Transverse colon (tissue), 4 donors: ENCODE measurements at regions of chr16 and their contacts with region 1.

Region 1: GRCh38 chr16:30445408-30446202 is at the start of gene SEPHS2:
- DNase-seq: peak; percentile 99
- H3K4me3 ChIP-seq: peak within 1 kb of the TSS; percentile 70 to 99 (median 76)
- H3K27ac ChIP-seq: peak within 1 kb of the TSS; percentile 93 to 99 (median 96)
- H3K4me1 ChIP-seq: peaks cover 11 to 49% (median 32%) of the 10 kb centered on the region in 4 donors
- H3K27me3 ChIP-seq: no peaks in the 10 kb centered on the region
- CTCF ChIP-seq: peak; percentile 21 to 53 (median 42)
- EP300 ChIP-seq: no peak
- POLR2A ChIP-seq: peak; percentile 94
- total RNA-seq, gene SEPHS2: 86.7 to 218 (median 151) TPM

Region 2: DNA sequence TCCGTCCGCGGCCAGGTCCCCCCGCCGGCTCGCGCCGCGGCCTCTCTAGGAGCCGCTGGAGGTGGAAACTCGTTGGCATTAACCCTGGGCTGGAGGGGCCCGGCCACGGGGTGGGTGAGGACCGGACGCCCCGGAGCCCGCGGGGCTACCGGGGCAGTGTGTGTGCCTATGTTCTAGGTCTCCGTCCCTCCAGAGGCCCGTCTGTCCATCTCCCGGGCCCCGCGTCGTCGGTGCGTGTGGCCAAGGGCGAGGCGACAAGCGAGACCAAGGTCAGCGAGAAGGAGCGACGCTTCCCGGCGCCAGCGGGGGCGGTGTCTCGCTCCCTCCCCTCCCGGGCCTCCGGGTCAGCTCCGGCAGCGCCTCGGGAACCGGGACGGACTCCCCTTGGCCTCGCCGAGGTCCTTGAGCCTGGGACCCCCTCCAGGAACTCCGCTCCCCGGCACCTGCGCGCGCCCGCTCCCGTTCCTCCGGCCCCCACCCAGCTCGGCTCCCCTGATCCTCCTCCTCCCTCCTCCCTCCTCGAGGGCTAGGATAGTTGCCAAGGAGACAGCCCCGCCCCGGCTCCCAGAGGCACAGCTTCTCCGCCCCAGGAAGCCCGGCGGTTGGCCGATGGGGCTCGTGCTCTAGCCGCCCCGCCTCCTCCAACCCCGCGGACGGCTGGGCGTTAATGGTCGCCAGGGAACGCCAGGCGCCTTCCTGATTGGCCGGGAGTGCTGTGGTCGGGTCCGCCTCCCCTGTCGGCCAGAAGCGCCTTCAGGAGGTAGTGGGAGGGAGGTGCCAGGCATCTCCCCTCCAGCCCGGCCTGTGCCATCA is 81.4 kb after region 1 on chr16:
- in situ Hi-C with region 1: loop called in 1 of 4 experiments (anchors 10 kb)
- intact Hi-C with region 1: loop called (anchors 10 kb)
- DNase-seq: peak; percentile 99
- H3K4me3 ChIP-seq: peak overlapping the region; percentile 75 to 93 (median 84)
- H3K27ac ChIP-seq: peak overlapping the region; percentile 97 to 99 (median 99)
- H3K4me1 ChIP-seq: peaks cover 14 to 41% (median 20%) of the 10 kb centered on the region in 4 donors
- H3K27me3 ChIP-seq: no peaks in the 10 kb centered on the region
- CTCF ChIP-seq: peak; percentile 24 to 71 (median 34)
- EP300 ChIP-seq: no peak
- POLR2A ChIP-seq: peak; percentile 93

Region 3: DNA sequence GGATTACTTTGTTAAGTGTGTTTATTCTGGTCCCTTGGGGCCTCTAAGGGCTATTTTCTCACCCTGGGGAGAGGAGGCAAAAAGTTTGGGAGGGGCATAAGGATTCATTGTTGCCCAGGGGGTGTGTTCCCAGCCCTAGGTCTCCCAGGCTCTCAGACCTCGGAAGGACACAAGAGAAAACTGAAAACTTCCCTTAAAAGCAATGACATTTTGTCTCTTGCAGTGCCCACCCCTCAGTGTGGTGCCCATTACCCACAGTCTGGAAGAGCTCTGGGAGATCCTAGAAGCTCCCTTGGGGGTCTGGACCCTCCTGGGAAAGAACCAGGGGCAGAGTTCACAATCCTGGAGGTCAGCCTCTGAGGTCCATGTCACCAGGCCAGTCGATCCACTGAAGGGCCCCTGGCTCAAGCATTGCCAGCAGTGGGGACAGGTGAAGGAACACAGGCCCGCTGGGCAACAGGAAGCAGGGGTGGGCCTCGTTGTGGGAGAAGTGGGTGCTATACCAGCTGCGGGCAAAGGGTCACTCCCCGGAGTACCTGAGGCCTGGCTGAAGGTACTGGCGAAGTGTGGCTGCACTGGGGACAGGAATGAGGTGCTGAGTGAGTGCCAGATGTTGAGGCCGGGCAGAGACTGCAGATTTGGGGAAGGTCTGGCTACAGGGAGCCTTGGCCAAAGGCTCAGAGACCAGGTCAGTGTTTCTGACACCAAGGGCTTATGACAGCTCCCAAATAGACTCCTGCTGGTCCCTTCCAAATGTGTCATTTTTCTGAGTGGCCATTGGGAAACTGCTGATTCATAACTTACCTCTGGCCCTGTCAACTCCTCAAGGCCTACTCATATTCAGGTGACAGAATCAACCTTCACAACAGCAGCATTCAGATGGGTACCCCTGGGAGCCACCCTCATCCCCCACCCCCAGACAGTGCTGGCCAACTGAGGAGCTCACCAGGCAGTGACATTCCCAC is 93.7 kb after region 1 on chr16:
- in situ Hi-C with region 1: no loop called
- intact Hi-C with region 1: no loop called
- DNase-seq: no peak
- H3K4me3 ChIP-seq: no peak overlapping the region
- H3K27ac ChIP-seq: peak overlapping the region in 2 of 4 donors; percentile 48 to 77
- H3K4me1 ChIP-seq: peaks cover 5 to 40% (median 32%) of the 10 kb centered on the region in 4 donors
- H3K27me3 ChIP-seq: no peaks in the 10 kb centered on the region
- CTCF ChIP-seq: no peak
- EP300 ChIP-seq: no peak
- POLR2A ChIP-seq: no peak

Region 4: DNA sequence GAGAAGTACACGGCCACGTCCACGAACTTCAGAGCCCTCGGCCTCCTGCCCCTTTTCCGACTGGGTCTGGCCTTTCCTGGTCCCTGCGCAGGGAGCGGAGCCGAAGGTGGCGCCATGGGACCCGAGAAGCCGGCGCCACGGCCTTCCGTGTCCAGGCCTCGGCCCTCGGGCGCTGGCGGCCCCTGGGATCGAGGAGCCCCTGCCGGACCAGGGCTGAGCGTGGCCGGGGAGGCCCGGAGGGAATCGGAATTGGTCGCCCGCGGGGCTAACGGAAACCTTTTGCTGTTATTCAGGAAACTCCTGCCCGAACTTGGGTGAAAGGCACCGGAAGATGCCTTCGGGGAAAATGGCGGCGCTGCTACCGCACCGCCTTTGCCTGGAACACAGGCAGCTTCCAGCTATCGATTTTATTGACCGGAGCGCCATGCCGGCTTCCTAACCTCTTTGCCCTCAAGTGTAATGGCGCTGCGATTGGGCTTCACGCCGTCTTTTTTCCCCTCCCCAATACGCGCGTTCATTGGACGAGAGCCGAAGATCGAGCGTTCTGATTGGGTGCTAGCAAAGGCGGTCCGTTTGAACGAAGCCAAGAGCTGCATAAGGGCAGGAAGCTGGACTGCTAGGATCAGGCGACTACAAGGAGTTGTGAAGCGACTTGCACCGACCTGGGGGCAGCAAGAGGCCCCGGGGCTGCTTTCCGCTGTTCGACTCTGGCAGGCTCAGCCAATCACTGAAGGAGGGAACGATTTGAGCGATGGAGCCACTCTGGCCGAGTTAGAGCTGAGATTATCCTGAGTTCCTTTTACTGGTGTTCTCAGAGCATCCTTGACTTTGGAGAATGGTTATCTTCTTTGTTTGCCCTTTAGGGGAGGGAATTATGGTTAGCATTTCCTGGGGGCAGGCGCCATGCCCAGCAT is 164.6 kb after region 1 on chr16 and contains the start of gene ZNF689:
- in situ Hi-C with region 1: loop called in 1 of 4 experiments (anchors 10 kb)
- intact Hi-C with region 1: no loop called
- DNase-seq: peak; percentile 96
- H3K4me3 ChIP-seq: peak within 1 kb of the TSS; percentile 71 to 96 (median 89)
- H3K27ac ChIP-seq: peak within 1 kb of the TSS; percentile 94 to 99 (median 98)
- H3K4me1 ChIP-seq: peaks cover 5 to 23% (median 17%) of the 10 kb centered on the region in 4 donors
- H3K27me3 ChIP-seq: no peaks in the 10 kb centered on the region
- CTCF ChIP-seq: peak in 1 of 5 experiments; percentile 8
- EP300 ChIP-seq: no peak
- POLR2A ChIP-seq: peak; percentile 80
- total RNA-seq, gene ZNF689: 3.4 to 77.1 (median 8.1) TPM